ENCODE measurements at regions of chr12 and their contacts with region 1.

Region 1: DNA sequence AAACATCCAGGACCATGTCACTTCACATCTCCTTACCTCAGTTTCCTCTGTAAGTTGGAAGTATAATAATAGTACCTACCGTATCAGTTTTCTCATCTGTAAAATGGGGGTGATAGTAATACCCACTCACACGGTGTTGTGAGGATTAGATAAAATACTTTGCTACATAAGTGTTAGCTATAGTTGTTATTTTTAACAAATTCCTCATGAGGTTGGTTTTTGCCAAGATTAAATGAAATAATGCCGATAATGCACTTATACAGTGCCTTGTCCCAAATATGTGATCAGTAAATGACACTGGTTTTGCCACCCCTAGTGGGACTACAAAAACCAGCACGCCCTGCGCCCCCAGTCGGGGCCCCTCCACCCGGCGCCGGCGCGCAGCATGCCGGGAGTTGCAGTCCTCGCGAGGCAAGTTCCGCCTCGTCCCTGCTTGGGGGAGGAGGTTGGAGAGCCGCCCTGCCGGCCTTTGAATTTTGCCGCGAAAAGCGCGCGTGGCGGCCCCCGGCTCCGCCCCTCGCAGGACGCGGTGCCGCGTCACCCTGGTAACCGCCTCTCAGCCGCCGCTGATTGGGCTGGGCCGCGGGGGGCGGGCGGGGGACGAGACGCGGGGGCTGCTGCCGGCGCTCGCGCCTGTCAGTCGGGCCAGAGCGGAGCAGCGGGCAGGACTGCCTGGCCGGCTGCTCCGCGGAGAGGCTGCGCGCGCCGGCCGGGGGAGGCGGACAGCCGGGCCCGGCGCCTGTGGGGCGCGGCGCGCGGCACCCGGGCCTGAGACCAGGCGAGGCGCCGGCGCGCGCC is at the start of gene FAM222A:
- DNase-seq: peak; percentile 98
- H3K4me3 ChIP-seq: peak within 1 kb of the TSS; percentile 33 to 58 (median 33)
- H3K27ac ChIP-seq: no peak within 1 kb of the TSS
- H3K4me1 ChIP-seq: no peaks in the 10 kb centered on the region
- H3K27me3 ChIP-seq: peaks cover 23 to 28% of the 10 kb centered on the region in 2 experiments
- CTCF ChIP-seq: no peak
- POLR2A ChIP-seq: peak; percentile 81
- total RNA-seq, gene FAM222A: 0.69 and 1.7 TPM in 2 replicates

Region 2: DNA sequence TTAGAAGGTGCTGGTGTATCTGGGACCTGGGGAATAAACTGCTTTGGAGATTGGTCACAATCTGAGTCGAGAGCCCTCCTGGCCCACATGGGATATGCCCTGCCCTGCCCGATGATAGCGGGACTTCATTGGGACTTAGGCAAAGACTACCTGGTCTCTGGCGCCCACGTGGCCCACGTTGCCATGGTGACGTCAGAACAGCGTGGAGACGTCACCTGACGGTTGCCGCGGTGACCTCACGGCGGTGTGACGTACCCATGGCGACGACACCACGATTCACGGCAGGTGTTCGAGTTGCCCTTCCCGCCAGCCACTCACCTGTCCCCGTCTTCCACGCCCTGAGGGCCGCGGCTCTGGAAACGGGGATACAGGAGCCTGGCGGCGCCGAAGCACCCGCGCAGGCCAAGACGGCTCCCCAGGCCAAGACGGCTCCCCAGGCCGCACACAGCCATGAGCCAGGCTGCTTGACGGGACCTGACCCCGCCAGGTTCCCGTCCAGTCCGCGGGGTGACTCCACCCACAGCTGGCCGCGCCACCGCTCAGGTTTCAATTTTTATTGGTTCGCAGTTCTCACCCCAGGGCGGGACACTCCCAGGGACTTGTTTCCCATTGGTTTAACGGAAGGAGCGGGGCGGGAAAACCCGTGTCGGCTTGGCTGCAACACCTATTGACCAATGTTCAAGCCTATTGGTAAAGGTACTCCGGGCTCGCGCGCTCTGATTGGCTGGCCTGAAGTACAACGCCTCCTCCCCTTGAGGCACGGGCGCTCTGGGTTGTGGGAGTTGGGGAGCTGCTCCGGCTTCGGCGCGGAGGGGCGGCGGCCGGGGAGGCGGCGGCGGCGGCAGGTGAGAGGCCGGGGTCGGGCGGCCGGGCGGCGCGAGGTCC is 140.1 kb before region 1 on chr12 and contains the starts of genes MMAB and MVK:
- CTCF ChIA-PET with region 1: no interaction called
- POLR2A ChIA-PET with region 1: no interaction called
- dilution Hi-C with region 1: no loop called
- intact Hi-C with region 1: loop called (anchors 10 kb)
- DNase-seq: peak; percentile 99
- H3K4me3 ChIP-seq: peak within 1 kb of the TSS; percentile 27 to 83 (median 82)
- H3K27ac ChIP-seq: peak within 1 kb of the TSS; percentile 42
- H3K4me1 ChIP-seq: peaks cover 16% of the 10 kb centered on the region
- H3K27me3 ChIP-seq: no peaks in the 10 kb centered on the region
- CTCF ChIP-seq: no peak
- POLR2A ChIP-seq: peak; percentile 73
- total RNA-seq, gene MMAB: 45.9 and 46.0 TPM in 2 replicates
- total RNA-seq, gene MVK: 40.3 and 42.6 TPM in 2 replicates

Region 3: GRCh38 chr12:109736552-109737108 is 23.2 kb after region 1 on chr12:
- CTCF ChIA-PET with region 1: interaction called, 3 read pairs
- POLR2A ChIA-PET with region 1: no interaction called
- dilution Hi-C with region 1: no loop called
- intact Hi-C with region 1: loop called (anchors 2 kb)
- DNase-seq: peak; percentile 41
- H3K4me3 ChIP-seq: no peak overlapping the region
- H3K27ac ChIP-seq: no peak overlapping the region
- H3K4me1 ChIP-seq: peaks cover 8% of the 10 kb centered on the region
- H3K27me3 ChIP-seq: no peaks in the 10 kb centered on the region
- CTCF ChIP-seq: no peak
- POLR2A ChIP-seq: no peak

Region 4: GRCh38 chr12:109833307-109834189 is 120.2 kb after region 1 on chr12 and contains the start of gene TRPV4:
- CTCF ChIA-PET with region 1: no interaction called
- POLR2A ChIA-PET with region 1: no interaction called
- dilution Hi-C with region 1: no loop called
- intact Hi-C with region 1: loop called (anchors 2 kb)
- DNase-seq: peak; percentile 64
- H3K4me3 ChIP-seq: peak within 1 kb of the TSS; percentile 50 to 63 (median 58)
- H3K27ac ChIP-seq: peak within 1 kb of the TSS; percentile 27
- H3K4me1 ChIP-seq: peaks cover 24% of the 10 kb centered on the region
- H3K27me3 ChIP-seq: no peaks in the 10 kb centered on the region
- CTCF ChIP-seq: no peak
- POLR2A ChIP-seq: peak; percentile 70
- total RNA-seq, gene TRPV4: 8.8 and 12.3 TPM in 2 replicates